Caco-2 (cell line): ENCODE measurements at regions of chr19 and their contacts with region 1.

Region 1: DNA sequence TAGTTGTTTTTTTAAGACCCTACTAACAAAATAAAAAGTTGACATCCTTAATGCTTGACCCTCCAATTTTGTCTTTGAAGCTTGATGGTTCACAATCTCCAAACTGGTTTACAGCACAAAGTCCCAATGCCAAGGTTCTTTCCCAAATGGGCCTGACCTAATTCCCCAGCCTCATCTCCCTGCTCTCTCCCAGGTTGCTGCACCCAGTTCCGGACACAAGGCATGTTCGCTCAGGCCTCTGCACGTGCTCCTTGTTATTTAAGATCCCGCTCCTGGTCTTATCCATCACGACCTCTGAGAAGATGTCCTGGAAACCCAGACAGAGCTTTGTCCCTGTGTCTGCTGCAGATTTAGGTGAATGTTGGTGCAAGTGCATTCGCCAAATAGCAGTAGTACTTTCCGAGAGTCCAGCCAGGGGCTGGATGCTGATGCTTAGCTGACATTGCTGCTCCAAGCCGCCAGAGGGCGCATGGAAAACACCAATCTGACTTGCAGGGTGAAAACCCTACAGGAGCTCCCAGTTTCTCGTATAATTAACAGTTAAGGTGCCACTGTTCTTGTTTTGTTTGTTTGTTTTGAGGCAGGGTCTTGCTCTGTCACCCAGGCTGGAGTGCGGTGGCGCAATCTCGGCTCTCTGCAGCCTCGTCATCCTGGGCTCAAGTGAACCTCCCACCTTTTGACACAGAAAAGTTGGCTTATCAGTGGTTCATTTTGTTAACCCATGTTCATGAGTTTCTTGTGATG is 18.5 kb downstream of the LYPD3 start:
- DNase-seq: peak; percentile 71 to 82
- H3K4me3 ChIP-seq: no peak overlapping the region
- H3K4me3 Mint-ChIP-seq: no peak overlapping the region
- H3K27ac Mint-ChIP-seq: no peak overlapping the region
- H3K4me1 ChIP-seq: no peaks in the 10 kb centered on the region
- H3K4me1 Mint-ChIP-seq: peaks cover 5% of the 10 kb centered on the region
- H3K27me3 ChIP-seq: no peaks in the 10 kb centered on the region
- H3K27me3 Mint-ChIP-seq: peaks cover 2% of the 10 kb centered on the region
- CTCF ChIP-seq: peak; percentile 94 to 98

Region 2: GRCh38 chr19:43372462-43372861 is 74.5 kb before region 1 on chr19:
- CTCF ChIA-PET with region 1: no interaction called
- POLR2A ChIA-PET with region 1: no interaction called
- intact Hi-C with region 1: no loop called
- DNase-seq: no peak
- H3K4me3 ChIP-seq: no peak overlapping the region
- H3K4me3 Mint-ChIP-seq: no peak overlapping the region
- H3K27ac Mint-ChIP-seq: no peak overlapping the region
- H3K4me1 ChIP-seq: no peaks in the 10 kb centered on the region
- H3K4me1 Mint-ChIP-seq: no peaks in the 10 kb centered on the region
- H3K27me3 ChIP-seq: no peaks in the 10 kb centered on the region
- H3K27me3 Mint-ChIP-seq: peaks cover 5% of the 10 kb centered on the region
- CTCF ChIP-seq: no peak

Region 3: DNA sequence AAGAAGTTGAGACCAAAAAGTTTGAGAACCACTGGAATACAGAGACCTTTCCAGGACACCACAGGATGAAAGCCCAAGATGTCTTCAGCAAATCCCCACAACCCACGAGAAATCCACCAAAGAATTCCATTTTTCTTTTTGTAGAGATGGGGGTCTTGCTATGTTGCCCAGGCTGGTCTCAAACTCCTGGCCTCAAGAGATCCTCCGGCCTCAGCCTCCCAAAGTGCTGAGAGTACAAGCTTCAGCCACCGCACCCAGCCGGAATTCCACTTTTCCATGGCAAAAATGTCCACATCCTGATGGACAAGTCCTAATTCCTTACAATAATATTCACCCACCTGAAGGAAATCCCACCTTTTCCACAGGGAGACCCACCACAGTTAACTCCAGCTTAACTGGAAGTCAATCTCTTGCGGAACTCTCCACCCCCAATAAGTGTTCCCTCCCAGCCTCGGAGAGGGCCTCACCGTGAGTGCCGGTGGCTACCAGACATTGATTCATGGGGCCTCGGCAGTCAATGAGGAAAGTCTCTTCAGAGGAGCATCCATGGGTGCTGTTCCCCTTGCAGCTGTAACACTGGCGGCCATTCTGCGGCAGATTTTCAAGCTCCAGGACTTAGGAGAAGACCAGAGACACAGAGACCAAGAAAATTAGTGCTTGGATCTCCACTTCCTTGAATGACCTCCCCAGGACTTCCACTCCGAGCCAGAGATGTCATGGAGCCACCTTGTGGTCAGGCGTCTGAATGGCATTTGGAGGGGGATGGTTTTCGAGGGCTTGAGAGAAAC is 205.0 kb after region 1 on chr19:
- CTCF ChIA-PET with region 1: no interaction called
- POLR2A ChIA-PET with region 1: no interaction called
- intact Hi-C with region 1: loop called (anchors 10 kb)
- DNase-seq: peak; percentile 76 to 79
- H3K4me3 ChIP-seq: no peak overlapping the region
- H3K4me3 Mint-ChIP-seq: peak overlapping the region; percentile 37
- H3K27ac Mint-ChIP-seq: peak overlapping the region; percentile 36
- H3K4me1 ChIP-seq: no peaks in the 10 kb centered on the region
- H3K4me1 Mint-ChIP-seq: no peaks in the 10 kb centered on the region
- H3K27me3 ChIP-seq: no peaks in the 10 kb centered on the region
- H3K27me3 Mint-ChIP-seq: no peaks in the 10 kb centered on the region
- CTCF ChIP-seq: peak; percentile 79 to 94